Activated T-helper 2 cell treated with anti-CD3 and anti-CD28 coated beads, Interferon-gamma antibody, Interleukin-2, Interleukin-4, amounts not matched to agents 10 μg/mL and 5 μg/mL and 100 μg/mL, durations not matched to agents 14 hours and 24 hours and 36 hours (primary cell): ENCODE measurements at regions of chr20 and their contacts with region 1.

Region 1: DNA sequence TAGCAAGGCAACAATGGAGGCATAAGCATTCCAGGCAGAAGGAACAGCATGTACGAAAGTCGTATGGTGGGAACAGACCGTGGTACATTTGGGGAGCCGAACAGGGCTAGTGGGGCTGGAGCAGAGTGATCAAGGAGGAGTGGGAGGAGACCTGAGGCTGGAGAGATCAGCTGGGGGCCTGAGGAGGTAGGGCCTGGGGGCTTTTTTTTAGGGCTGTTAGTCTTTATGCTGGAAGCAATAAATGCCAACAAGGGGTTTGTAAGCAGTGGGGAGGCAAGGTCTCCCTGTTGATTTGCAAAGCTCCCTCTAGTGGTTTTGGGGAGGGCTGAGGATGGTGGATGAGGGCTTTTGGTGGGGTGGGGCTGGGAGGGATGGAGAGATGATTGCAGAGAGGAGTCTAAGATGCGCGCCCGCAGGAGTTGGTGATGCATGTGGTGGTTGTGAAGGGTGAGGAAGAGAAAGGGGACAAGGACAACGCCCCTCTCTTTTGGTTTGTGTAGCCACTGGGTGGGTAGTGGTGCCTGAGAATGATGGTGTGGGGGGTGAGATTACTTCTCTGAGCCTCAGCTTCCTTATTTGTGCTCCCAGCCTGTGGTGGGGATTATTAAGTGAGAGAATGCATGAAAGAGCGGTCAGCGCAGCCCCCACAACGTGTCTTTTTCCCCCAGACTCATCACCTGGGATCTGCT is 74.1 kb upstream of the TOX2 start:
- DNase-seq: peak; percentile 26
- H3K4me3 Mint-ChIP-seq: no peak overlapping the region
- H3K27ac Mint-ChIP-seq: peak overlapping the region; percentile 56
- H3K4me1 Mint-ChIP-seq: peaks cover 60% of the 10 kb centered on the region
- H3K27me3 Mint-ChIP-seq: peaks cover 2% of the 10 kb centered on the region

Region 2: GRCh38 chr20:43456809-43457639 is 383.5 kb before region 1 on chr20:
- intact Hi-C with region 1: loop called (anchors 10 kb)
- DNase-seq: peak; percentile 85
- H3K4me3 Mint-ChIP-seq: peak overlapping the region; percentile 88
- H3K27ac Mint-ChIP-seq: peak overlapping the region; percentile 99
- H3K4me1 Mint-ChIP-seq: peaks cover 22% of the 10 kb centered on the region
- H3K27me3 Mint-ChIP-seq: peaks cover 5% of the 10 kb centered on the region

Region 3: GRCh38 chr20:43800186-43800585 is 40.3 kb before region 1 on chr20:
- intact Hi-C with region 1: no loop called
- DNase-seq: no peak
- H3K4me3 Mint-ChIP-seq: no peak overlapping the region
- H3K27ac Mint-ChIP-seq: peak overlapping the region; percentile 74
- H3K4me1 Mint-ChIP-seq: peaks cover 28% of the 10 kb centered on the region
- H3K27me3 Mint-ChIP-seq: no peaks in the 10 kb centered on the region

Region 4: GRCh38 chr20:43914311-43915210 is 74.0 kb after region 1 on chr20 and contains the start of gene TOX2:
- intact Hi-C with region 1: loop called (anchors 5 kb)
- DNase-seq: peak; percentile 40
- H3K4me3 Mint-ChIP-seq: peak within 1 kb of the TSS; percentile 82
- H3K27ac Mint-ChIP-seq: peak within 1 kb of the TSS; percentile 62
- H3K4me1 Mint-ChIP-seq: peaks cover 32% of the 10 kb centered on the region
- H3K27me3 Mint-ChIP-seq: peaks cover 46% of the 10 kb centered on the region
- total RNA-seq, gene TOX2: 2.4 and 3.0 TPM in 2 replicates

Region 5: GRCh38 chr20:44028868-44029847 is 188.6 kb after region 1 on chr20:
- intact Hi-C with region 1: no loop called
- DNase-seq: peak; percentile 35
- H3K4me3 Mint-ChIP-seq: peak overlapping the region; percentile 49
- H3K27ac Mint-ChIP-seq: peak overlapping the region; percentile 10
- H3K4me1 Mint-ChIP-seq: peaks cover 49% of the 10 kb centered on the region
- H3K27me3 Mint-ChIP-seq: peaks cover 51% of the 10 kb centered on the region

Region 6: GRCh38 chr20:44080646-44081267 is 240.2 kb after region 1 on chr20:
- intact Hi-C with region 1: loop called (anchors 5 kb)
- DNase-seq: peak; percentile 58
- H3K4me3 Mint-ChIP-seq: no peak overlapping the region
- H3K27ac Mint-ChIP-seq: no peak overlapping the region
- H3K4me1 Mint-ChIP-seq: peaks cover 23% of the 10 kb centered on the region
- H3K27me3 Mint-ChIP-seq: peaks cover 7% of the 10 kb centered on the region